Heart right ventricle (tissue), 16 donors: ENCODE measurements at regions of chr20 and their contacts with region 1.

Region 1: GRCh38 chr20:3854462-3854871 is 7.8 kb downstream of the MAVS start:
- DNase-seq: no peak
- ATAC-seq: peak in 2 of 8 donors; percentile 33 to 49
- H3K4me3 ChIP-seq: no peak overlapping the region
- H3K27ac ChIP-seq: peak overlapping the region in 1 of 10 donors; percentile 26
- H3K4me1 ChIP-seq: peaks cover 0 to 17% (median 5%) of the 10 kb centered on the region in 9 donors
- H3K27me3 ChIP-seq: no peaks in the 10 kb centered on the region
- CTCF ChIP-seq: no peak

Region 2: GRCh38 chr20:3686867-3687321 is 167.6 kb before region 1 on chr20:
- intact Hi-C with region 1: loop called in 1 of 10 experiments (anchors 10 kb)
- DNase-seq: peak; percentile 73 to 86
- ATAC-seq: peak; percentile 78 to 92 (median 90)
- H3K4me3 ChIP-seq: no peak overlapping the region
- H3K27ac ChIP-seq: peak overlapping the region in 9 of 10 donors; percentile 26 to 76 (median 55)
- H3K4me1 ChIP-seq: peaks cover 6 to 22% (median 16%) of the 10 kb centered on the region in 9 donors
- H3K27me3 ChIP-seq: peaks cover 0 to 22% (median 10%) of the 10 kb centered on the region in 7 donors
- CTCF ChIP-seq: peak in 1 of 9 donors; percentile 17

Region 3: GRCh38 chr20:3727401-3728021 is 127.0 kb before region 1 on chr20:
- intact Hi-C with region 1: no loop called
- DNase-seq: no peak
- ATAC-seq: peak in 6 of 8 donors; percentile 16 to 47 (median 36)
- H3K4me3 ChIP-seq: peak overlapping the region in 4 of 10 donors; percentile 0 to 26 (median 16)
- H3K27ac ChIP-seq: peak overlapping the region in 8 of 10 donors; percentile 36 to 96 (median 68)
- H3K4me1 ChIP-seq: peaks cover 12 to 60% (median 47%) of the 10 kb centered on the region in 9 donors
- H3K27me3 ChIP-seq: peaks cover 0 to 53% (median 10%) of the 10 kb centered on the region in 7 donors
- CTCF ChIP-seq: no peak

Region 4: DNA sequence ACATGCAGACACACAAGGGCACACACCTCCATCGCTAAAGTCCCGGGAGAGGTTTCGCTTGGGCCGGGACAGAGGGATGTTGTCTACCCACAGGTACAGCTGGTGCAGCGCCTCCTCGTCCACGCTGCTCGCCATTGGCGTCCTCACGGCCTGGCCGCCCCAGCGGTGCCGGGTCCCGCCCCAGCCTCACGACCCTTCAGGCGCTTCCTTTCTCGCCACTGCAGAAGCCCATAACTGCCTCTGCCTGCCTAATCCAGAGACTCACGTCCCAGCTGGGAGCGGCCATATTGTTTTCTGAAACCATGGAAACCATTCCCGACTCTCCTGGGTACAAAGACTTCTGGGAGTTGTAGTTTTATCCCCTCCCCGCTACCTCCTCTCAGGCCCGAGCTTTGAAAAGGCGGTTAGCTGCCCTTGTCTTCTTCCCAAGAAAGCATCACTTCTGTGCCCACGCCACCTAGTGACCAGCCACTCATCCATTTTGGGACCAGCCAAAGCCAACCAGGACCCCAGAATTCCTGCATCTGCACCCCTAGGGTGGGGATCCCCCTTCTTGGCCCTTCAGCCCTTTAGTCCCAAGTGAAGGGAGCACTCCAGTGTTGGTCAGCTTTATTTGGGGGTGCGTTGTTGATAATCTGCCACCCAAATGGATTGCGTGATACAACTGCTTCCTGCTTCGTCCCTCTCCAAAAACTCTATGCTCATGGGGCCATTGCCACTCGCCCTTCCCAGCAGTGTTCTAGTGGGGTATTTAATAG is 73.1 kb before region 1 on chr20 and contains the start of gene SPEF1:
- intact Hi-C with region 1: loop called in 5 of 10 experiments (anchors 2 to 5 kb)
- DNase-seq: peak; percentile 55 to 87
- ATAC-seq: peak; percentile 68 to 87 (median 80)
- H3K4me3 ChIP-seq: peak within 1 kb of the TSS in 9 of 10 donors; percentile 27 to 51 (median 44)
- H3K27ac ChIP-seq: peak within 1 kb of the TSS in 8 of 10 donors; percentile 2 to 57 (median 30)
- H3K4me1 ChIP-seq: peaks cover 33 to 61% (median 43%) of the 10 kb centered on the region in 9 donors
- H3K27me3 ChIP-seq: peaks cover 0 to 17% (median 0%) of the 10 kb centered on the region in 7 donors
- CTCF ChIP-seq: peak in 7 of 9 donors; percentile 27 to 54 (median 44)
- total RNA-seq, gene SPEF1: 0.16 to 0.47 (median 0.23) TPM in 6 of 10 donors, not detected in the others

Region 5: DNA sequence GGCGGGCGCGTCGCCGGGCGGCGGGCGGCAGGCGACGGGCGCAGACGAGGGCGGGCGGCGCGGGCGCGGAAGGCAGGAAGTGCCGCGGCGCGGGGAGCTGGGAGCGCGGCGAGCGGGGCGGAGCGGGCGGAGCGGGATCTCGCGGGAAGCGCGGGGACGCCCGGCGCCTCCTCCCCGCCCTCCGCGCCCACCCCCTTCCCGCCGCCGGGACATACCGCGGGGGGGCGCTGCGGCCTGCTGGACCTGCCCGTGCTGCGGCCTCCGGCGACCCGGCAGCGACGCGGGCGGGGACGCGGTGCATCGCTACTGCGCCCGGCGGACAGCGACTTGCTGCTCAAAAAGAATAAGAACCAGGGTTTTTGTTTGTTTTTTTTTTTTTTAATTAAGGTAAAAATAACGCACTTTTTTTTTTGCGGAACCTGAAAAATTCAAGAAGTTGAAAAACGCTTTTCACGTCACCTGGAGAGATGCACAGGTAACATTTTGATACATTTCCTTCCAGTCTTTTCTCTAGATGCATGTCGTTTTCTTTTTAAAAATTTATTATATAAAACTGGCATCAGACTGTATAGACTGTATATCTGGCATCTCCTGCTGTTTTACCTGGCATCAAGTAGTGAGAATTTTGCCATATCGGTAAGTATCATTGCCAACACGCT is 67.7 kb before region 1 on chr20 and contains the start of gene CENPB:
- intact Hi-C with region 1: loop called in 5 of 10 experiments (anchors 2 to 5 kb)
- DNase-seq: peak; percentile 90 to 94
- ATAC-seq: peak; percentile 91 to 95 (median 92)
- H3K4me3 ChIP-seq: peak within 1 kb of the TSS; percentile 47 to 90 (median 70)
- H3K27ac ChIP-seq: peak within 1 kb of the TSS; percentile 61 to 89 (median 84)
- H3K4me1 ChIP-seq: peaks cover 17 to 43% (median 33%) of the 10 kb centered on the region in 9 donors
- H3K27me3 ChIP-seq: no peaks in the 10 kb centered on the region
- CTCF ChIP-seq: peak; percentile 71 to 95 (median 88)
- total RNA-seq, gene CENPB: 52.3 to 95.7 (median 67.7) TPM